ENCODE measurements at regions of chr15 and their contacts with region 1.

Region 1: GRCh38 chr15:79853458-79854328 is 43.1 kb downstream of the MTHFS start:
- DNase-seq: peak; percentile 83
- H3K4me3 Mint-ChIP-seq: no peak overlapping the region
- H3K27ac Mint-ChIP-seq: no peak overlapping the region
- H3K4me1 Mint-ChIP-seq: peaks cover 15% of the 10 kb centered on the region
- H3K27me3 Mint-ChIP-seq: no peaks in the 10 kb centered on the region

Region 2: GRCh38 chr15:79339564-79340314 is 514.0 kb before region 1 on chr15:
- CTCF ChIA-PET with region 1: interaction called, 24 read pairs
- POLR2A ChIA-PET with region 1: no interaction called
- intact Hi-C with region 1: no loop called
- DNase-seq: no peak
- H3K4me3 Mint-ChIP-seq: no peak overlapping the region
- H3K27ac Mint-ChIP-seq: no peak overlapping the region
- H3K4me1 Mint-ChIP-seq: no peaks in the 10 kb centered on the region
- H3K27me3 Mint-ChIP-seq: no peaks in the 10 kb centered on the region

Region 3: DNA sequence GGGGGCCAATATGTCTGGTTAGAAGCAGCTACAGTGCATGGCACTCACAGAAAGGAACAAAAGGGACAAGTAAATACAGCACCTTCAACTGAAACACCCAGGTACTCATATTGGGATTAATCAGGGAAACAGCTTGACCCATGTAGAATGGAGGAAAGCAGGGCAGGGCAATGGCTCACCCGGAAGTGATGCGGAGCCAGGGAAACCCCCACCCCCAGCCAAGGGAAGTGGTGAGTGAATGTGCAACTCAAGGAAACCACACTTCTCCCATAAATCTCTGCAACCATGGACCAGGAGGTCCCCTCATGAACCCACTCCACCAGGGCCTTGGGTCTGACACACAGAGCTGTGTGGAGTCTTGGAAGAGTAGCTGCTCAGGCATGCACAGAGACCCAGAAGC is 73.9 kb before region 1 on chr15:
- CTCF ChIA-PET with region 1: interaction called, 4 read pairs
- POLR2A ChIA-PET with region 1: no interaction called
- intact Hi-C with region 1: loop called (anchors 5 kb)
- DNase-seq: peak; percentile 74
- H3K4me3 Mint-ChIP-seq: no peak overlapping the region
- H3K27ac Mint-ChIP-seq: no peak overlapping the region
- H3K4me1 Mint-ChIP-seq: peaks cover 5% of the 10 kb centered on the region
- H3K27me3 Mint-ChIP-seq: peaks cover 14% of the 10 kb centered on the region

Region 4: DNA sequence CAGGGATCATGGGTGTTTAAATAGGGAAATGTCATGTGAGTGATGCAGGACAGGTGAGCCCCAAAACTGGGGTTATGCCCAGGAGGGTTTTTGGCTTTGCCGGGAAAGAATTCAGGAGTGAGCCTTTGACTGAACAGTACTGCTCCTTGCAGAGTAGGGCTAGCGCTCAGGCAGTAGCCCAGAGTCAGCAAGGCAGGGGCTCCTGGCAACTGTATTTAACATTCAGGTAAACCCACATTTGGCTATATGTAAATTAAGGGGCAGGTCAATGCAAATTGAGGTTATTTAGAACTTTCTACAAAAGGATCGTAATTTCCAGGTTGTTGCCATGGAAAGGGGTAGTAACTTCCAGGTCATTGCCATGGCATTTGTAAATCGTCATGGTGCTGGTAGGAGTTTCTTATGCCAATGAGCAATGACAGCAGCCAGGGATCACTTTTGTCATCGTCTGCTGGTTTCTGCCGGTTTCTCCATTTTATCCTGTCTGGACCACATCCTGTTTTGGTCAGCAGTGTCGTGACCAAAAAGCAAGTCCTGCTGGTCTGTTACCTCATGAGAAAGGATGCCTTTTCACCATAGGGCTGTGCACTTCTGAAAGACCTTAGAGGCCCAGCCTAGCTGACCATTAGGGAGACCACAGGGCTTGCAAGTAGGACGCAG is 18.8 kb after region 1 on chr15:
- CTCF ChIA-PET with region 1: interaction called, 21 read pairs
- POLR2A ChIA-PET with region 1: no interaction called
- intact Hi-C with region 1: no loop called
- DNase-seq: peak; percentile 62
- H3K4me3 Mint-ChIP-seq: no peak overlapping the region
- H3K27ac Mint-ChIP-seq: no peak overlapping the region
- H3K4me1 Mint-ChIP-seq: peaks cover 23% of the 10 kb centered on the region
- H3K27me3 Mint-ChIP-seq: no peaks in the 10 kb centered on the region

Region 5: DNA sequence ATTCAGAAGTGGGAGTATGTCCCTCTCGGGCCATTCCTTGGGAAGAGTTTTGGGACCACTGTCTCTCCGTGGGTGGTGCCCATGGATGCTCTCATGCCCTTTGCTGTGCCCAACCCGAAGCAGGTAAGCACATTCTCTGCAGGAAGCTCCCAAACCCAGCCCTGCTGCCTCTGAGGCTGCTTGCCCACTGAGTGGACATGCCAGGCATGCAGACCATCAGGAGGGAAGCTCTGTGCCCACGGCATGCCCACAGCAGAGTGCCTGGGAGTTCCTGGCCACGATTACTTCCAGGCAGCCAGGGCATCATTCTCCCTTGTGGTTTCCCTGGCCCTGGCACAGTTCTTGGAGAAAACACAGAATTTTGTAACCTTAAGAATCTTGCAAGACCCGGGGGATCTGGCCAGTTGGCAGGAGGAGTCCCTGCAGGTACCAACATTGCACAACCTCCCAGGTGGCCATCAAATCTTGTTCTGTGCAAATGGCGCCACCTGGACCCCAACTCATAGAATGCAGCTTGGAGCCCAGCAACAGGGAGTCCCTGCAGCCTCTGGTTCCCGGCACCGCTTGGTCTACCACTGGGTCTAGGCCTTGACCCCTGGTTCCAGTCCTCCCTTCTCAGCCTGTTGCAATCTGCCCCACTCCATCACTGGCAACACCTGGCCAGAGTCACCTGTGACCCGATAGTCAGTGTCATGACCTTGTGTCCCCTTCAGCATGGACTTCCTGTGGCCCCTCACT is 319.5 kb after region 1 on chr15:
- CTCF ChIA-PET with region 1: interaction called, 20 read pairs
- POLR2A ChIA-PET with region 1: no interaction called
- intact Hi-C with region 1: no loop called
- DNase-seq: peak; percentile 84
- H3K4me3 Mint-ChIP-seq: no peak overlapping the region
- H3K27ac Mint-ChIP-seq: no peak overlapping the region
- H3K4me1 Mint-ChIP-seq: no peaks in the 10 kb centered on the region
- H3K27me3 Mint-ChIP-seq: no peaks in the 10 kb centered on the region

Region 6: DNA sequence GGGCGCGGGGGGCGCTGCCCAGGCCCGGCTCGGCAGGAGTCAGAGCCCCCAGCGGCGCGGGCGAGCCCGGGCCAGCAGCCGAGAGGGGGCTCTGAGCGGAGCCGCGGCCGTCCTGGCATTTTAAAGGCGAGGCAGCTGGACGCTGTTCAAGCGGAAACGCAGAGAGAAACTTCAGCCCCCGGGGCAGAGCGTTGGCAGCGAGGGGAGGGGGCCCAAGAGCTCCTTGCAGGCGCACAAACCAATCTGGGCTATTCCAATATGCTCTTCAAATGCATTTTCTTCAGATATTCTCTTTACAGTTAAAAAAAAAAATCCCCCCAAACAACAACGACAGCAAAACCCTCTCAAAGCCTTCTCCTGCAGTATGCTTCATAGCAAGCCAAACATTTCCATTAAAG is 398.4 kb after region 1 on chr15 and contains the start of gene CTXND1:
- CTCF ChIA-PET with region 1: no interaction called
- POLR2A ChIA-PET with region 1: no interaction called
- intact Hi-C with region 1: no loop called
- DNase-seq: no peak
- H3K4me3 Mint-ChIP-seq: peak within 1 kb of the TSS; percentile 31
- H3K27ac Mint-ChIP-seq: no peak within 1 kb of the TSS
- H3K4me1 Mint-ChIP-seq: peaks cover 7% of the 10 kb centered on the region
- H3K27me3 Mint-ChIP-seq: peaks cover 54% of the 10 kb centered on the region
- total RNA-seq, gene CTXND1: not detected

Region 7: DNA sequence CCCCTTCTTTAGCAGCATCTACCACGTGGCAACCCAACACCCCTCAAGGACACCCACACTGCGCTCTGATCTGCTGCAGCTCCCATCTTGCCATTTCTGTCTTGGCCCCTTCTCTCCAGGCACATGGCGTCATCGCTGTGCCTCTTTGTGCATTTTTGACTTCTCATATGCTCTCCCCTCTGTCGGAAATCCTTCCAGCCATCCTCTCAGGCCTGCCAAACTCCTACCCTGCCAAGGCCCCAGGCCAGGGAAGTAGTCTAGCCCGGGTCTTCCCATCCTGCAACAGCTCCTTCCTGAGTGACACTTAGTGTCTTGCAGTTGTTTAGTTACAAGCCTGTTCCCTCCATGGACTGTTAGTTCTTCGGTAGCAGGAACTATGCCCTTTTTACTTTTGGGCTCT is 432.4 kb after region 1 on chr15:
- CTCF ChIA-PET with region 1: no interaction called
- POLR2A ChIA-PET with region 1: no interaction called
- intact Hi-C with region 1: no loop called
- DNase-seq: no peak
- H3K4me3 Mint-ChIP-seq: no peak overlapping the region
- H3K27ac Mint-ChIP-seq: no peak overlapping the region
- H3K4me1 Mint-ChIP-seq: peaks cover 4% of the 10 kb centered on the region
- H3K27me3 Mint-ChIP-seq: peaks cover 3% of the 10 kb centered on the region